ENCODE measurements at regions of chrX and their contacts with region 1.

Region 1: GRCh38 chrX:37745354-37745753 is 34.5 kb upstream of the CYBB start:
- DNase-seq: peak; percentile 55
- H3K4me3 ChIP-seq: no peak overlapping the region; a peak in 1 of 4 replicates
- H3K27ac ChIP-seq: no peak overlapping the region
- H3K4me1 ChIP-seq: no peaks in the 10 kb centered on the region
- H3K27me3 ChIP-seq: no peaks in the 10 kb centered on the region; the same call in 1 of the 2 replicates
- CTCF ChIP-seq: peak; percentile 91
- EP300 ChIP-seq: no peak
- RAD21 ChIP-seq: peak; percentile 77

Region 2: GRCh38 chrX:37763400-37763799 is 18.0 kb after region 1 on chrX:
- CTCF ChIA-PET with region 1: interaction called, 12 read pairs
- POLR2A ChIA-PET with region 1: no interaction called
- DNase-seq: no peak
- H3K4me3 ChIP-seq: no peak overlapping the region
- H3K27ac ChIP-seq: no peak overlapping the region
- H3K4me1 ChIP-seq: no peaks in the 10 kb centered on the region
- H3K27me3 ChIP-seq: no peaks in the 10 kb centered on the region
- CTCF ChIP-seq: no peak
- EP300 ChIP-seq: no peak
- RAD21 ChIP-seq: no peak

Region 3: DNA sequence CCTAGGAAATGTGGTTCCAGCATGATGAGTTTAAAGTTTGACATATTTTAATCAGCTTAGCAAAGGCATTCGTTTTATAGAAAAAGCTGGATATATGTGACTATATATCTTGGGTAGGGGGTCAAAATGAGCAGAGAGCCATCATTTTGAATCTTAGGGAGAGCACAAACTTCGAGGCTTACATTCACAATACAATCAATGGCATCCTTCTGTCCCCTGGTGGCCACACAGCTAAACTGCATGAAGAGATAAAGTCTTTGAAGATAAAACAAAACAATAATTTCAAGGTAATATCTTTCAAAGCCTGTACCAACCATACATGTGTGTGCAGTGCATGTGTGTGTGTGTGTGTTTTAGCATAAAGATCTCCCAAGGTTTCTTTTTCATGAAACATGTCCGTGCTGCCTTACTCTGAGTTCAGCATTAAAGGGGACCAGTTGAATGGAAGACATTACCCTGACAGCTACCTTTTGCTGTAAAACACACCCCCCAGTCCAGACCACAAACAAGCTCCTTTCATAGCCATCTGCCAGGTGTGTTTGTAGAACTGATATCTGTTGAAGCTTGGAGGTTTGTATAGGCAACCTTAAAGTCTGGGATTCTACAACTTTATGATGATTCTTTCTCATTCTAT is 80.0 kb after region 1 on chrX:
- CTCF ChIA-PET with region 1: interaction called, 49 read pairs
- POLR2A ChIA-PET with region 1: no interaction called
- DNase-seq: peak; percentile 12
- H3K4me3 ChIP-seq: no peak overlapping the region
- H3K27ac ChIP-seq: no peak overlapping the region
- H3K4me1 ChIP-seq: no peaks in the 10 kb centered on the region
- H3K27me3 ChIP-seq: peaks cover 4% of the 10 kb centered on the region; the same call in 1 of the 2 replicates
- CTCF ChIP-seq: peak; percentile 94
- EP300 ChIP-seq: no peak
- RAD21 ChIP-seq: peak; percentile 74

Region 4: GRCh38 chrX:38175140-38175539 is 429.8 kb after region 1 on chrX:
- CTCF ChIA-PET with region 1: interaction called, 22 read pairs
- POLR2A ChIA-PET with region 1: no interaction called
- DNase-seq: peak; percentile 38
- H3K4me3 ChIP-seq: no peak overlapping the region
- H3K27ac ChIP-seq: no peak overlapping the region
- H3K4me1 ChIP-seq: no peaks in the 10 kb centered on the region
- H3K27me3 ChIP-seq: no peaks in the 10 kb centered on the region
- CTCF ChIP-seq: peak; percentile 64
- EP300 ChIP-seq: no peak
- RAD21 ChIP-seq: peak; percentile 80

Measured in SK-N-SH (cell line).